ENCODE measurements at regions of chr1 and their contacts with region 1.

Region 1: GRCh38 chr1:58816072-58816746 is 32.4 kb upstream of the JUN start:
- DNase-seq: peak; percentile 85
- ATAC-seq: peak; percentile 91
- H3K4me3 Mint-ChIP-seq: peak overlapping the region; percentile 93
- H3K27ac Mint-ChIP-seq: peak overlapping the region; percentile 92
- H3K4me1 Mint-ChIP-seq: peaks cover 46% of the 10 kb centered on the region
- H3K27me3 Mint-ChIP-seq: no peaks in the 10 kb centered on the region
- CTCF ChIP-seq: no peak

Region 2: DNA sequence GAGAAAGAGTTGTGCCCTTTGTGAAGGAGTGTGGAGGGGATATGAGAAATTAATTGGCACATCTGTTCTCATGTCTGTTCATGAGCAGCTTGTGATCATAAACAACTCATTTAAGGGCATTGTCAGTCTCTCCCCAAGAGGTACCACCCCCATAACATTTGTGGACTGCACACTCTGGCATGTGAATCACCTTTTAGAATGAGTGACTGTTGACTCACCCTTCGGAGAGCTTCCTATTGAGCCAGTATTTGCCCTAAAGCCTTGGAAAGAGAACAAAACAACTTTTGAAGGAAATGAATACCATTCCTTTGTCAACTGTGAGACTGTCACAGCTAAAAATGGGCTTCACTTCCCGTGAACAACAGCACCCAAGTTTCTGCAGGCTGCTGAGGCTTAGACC is 88.8 kb before region 1 on chr1:
- CTCF ChIA-PET with region 1: no interaction called
- POLR2A ChIA-PET with region 1: no interaction called
- intact Hi-C with region 1: no loop called
- DNase-seq: no peak
- ATAC-seq: no peak
- H3K4me3 Mint-ChIP-seq: no peak overlapping the region
- H3K27ac Mint-ChIP-seq: no peak overlapping the region
- H3K4me1 Mint-ChIP-seq: peaks cover 10% of the 10 kb centered on the region
- H3K27me3 Mint-ChIP-seq: no peaks in the 10 kb centered on the region
- CTCF ChIP-seq: no peak

Region 3: DNA sequence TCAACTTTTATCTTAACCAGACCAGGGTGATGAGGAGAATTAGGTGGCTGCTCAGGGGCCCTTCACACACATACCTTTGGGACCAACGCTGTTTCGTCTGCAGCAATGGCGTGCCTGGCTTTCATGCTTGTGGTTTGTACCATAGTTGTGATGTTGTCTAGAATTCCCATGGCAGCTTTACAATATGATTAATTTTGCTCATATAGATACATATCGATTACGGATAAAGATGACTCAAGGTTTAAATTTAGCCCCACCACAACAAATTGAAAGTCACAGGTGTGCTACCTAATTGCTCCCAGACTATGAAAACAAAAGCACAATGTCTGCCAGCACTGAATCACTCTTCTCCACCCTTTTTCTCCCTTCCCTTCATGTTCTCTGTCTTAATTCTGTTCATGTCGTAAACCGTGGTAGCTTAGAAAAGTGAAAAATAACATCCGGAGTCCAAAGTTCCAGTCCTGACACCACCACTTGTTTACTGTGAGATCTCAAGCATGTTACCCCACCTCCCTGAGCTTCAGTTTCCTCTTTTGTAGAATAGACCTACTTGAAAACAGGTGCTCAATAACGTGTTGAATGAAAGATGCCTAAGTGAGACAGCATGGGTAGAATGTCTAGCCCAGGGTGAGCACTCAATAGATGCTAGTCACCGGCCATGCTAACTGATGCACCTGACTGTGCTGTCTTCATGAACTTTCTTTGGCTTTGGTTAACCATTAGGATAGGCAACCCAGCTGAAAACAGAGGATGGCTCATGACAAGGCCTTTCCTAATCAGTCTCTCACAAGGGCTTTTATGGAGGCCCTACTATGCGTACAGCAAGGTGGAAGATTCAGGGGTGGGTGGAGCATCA is 10.3 kb before region 1 on chr1:
- CTCF ChIA-PET with region 1: interaction called, 3 read pairs
- POLR2A ChIA-PET with region 1: interaction called, 20 read pairs
- intact Hi-C with region 1: loop called (anchors 1 kb)
- DNase-seq: no peak
- ATAC-seq: peak; percentile 78
- H3K4me3 Mint-ChIP-seq: peak overlapping the region; percentile 64
- H3K27ac Mint-ChIP-seq: peak overlapping the region; percentile 92
- H3K4me1 Mint-ChIP-seq: peaks cover 55% of the 10 kb centered on the region
- H3K27me3 Mint-ChIP-seq: no peaks in the 10 kb centered on the region
- CTCF ChIP-seq: no peak

Region 4: DNA sequence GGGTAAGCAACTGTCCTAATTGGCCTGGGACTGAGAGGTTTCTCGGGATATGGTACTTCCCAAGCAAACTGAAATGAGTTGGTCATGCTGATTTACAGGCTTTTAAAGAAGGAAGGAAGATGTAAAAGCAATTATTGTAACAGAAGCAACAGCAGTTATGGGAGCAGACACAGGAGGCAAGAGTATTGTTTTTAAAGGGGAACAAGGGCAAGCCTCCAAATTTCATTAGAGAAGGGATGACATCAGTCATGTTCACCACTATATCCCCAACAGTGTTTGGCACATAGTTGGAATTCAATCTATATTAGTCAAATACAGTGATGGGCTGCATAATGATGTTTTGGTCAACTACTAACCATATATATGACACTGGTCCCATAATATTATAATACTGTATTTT is 13.7 kb after region 1 on chr1:
- CTCF ChIA-PET with region 1: no interaction called
- POLR2A ChIA-PET with region 1: no interaction called
- intact Hi-C with region 1: no loop called
- DNase-seq: no peak
- ATAC-seq: no peak
- H3K4me3 Mint-ChIP-seq: no peak overlapping the region
- H3K27ac Mint-ChIP-seq: no peak overlapping the region
- H3K4me1 Mint-ChIP-seq: no peaks in the 10 kb centered on the region
- H3K27me3 Mint-ChIP-seq: no peaks in the 10 kb centered on the region
- CTCF ChIP-seq: no peak

Region 5: DNA sequence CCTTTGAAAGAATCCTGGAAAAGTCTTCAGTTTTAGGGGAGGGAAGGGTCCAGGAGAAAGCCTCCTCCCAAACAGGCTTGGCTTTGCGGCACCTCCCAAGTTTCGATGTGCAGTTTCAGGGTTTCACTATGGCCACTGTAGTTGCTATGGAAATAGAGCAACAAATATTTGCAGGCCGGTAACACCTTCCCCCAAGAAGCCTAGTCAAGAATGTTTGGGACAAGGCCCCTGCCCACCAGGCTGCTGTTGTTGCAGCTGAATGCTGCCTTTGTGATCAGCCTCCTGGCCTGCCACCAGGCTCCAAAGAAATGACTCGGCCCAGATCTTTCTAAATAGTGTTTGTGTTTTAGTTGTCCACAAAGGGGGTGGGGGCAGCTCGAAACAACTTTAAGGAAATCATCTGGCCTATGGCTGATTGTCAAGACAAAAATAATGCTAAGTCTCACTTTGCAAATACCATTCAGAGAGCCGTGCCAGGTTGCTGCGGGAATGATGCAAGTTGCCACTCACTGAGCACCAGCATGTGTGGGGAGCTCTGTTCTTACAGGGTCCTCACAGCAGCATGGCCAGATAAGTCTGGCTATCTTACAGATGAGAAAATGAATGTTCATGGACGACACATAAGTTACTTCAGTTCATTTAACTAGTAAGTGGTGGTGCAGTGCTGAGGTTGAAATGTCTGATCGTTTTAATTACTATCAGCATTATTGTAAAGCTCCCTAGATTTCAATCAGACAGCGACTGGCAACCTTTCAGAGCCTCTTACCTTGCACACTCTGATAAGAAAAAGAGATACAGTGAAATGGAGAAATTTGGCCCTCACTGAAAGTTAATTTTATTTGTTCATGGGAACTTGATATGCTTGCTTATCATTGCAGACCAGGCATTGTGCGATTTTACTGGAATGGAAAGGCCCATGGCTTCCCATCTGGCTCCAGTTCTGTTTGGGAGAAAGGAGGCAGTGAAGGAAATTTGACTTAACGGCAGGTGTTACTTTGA is 58.8 kb after region 1 on chr1:
- CTCF ChIA-PET with region 1: no interaction called
- POLR2A ChIA-PET with region 1: no interaction called
- intact Hi-C with region 1: no loop called
- DNase-seq: no peak
- ATAC-seq: no peak
- H3K4me3 Mint-ChIP-seq: no peak overlapping the region
- H3K27ac Mint-ChIP-seq: no peak overlapping the region
- H3K4me1 Mint-ChIP-seq: no peaks in the 10 kb centered on the region
- H3K27me3 Mint-ChIP-seq: peaks cover 2% of the 10 kb centered on the region
- CTCF ChIP-seq: no peak

Region 6: GRCh38 chr1:58903514-58904298 is 87.5 kb after region 1 on chr1:
- CTCF ChIA-PET with region 1: no interaction called
- POLR2A ChIA-PET with region 1: interaction called, 5 read pairs
- intact Hi-C with region 1: loop called (anchors 1 kb)
- DNase-seq: peak; percentile 75
- ATAC-seq: peak; percentile 90
- H3K4me3 Mint-ChIP-seq: peak overlapping the region; percentile 84
- H3K27ac Mint-ChIP-seq: peak overlapping the region; percentile 81
- H3K4me1 Mint-ChIP-seq: peaks cover 16% of the 10 kb centered on the region
- H3K27me3 Mint-ChIP-seq: no peaks in the 10 kb centered on the region
- CTCF ChIP-seq: no peak

Region 7: GRCh38 chr1:59007820-59008598 is 191.8 kb after region 1 on chr1:
- CTCF ChIA-PET with region 1: no interaction called
- POLR2A ChIA-PET with region 1: no interaction called
- intact Hi-C with region 1: loop called (anchors 1 kb)
- DNase-seq: no peak
- ATAC-seq: peak; percentile 76
- H3K4me3 Mint-ChIP-seq: peak overlapping the region; percentile 62
- H3K27ac Mint-ChIP-seq: peak overlapping the region; percentile 90
- H3K4me1 Mint-ChIP-seq: peaks cover 82% of the 10 kb centered on the region
- H3K27me3 Mint-ChIP-seq: no peaks in the 10 kb centered on the region
- CTCF ChIP-seq: no peak

Region 8: GRCh38 chr1:59020151-59020997 is 204.2 kb after region 1 on chr1:
- CTCF ChIA-PET with region 1: no interaction called
- POLR2A ChIA-PET with region 1: interaction called, 4 read pairs
- intact Hi-C with region 1: loop called (anchors 2 kb)
- DNase-seq: no peak
- ATAC-seq: peak; percentile 96
- H3K4me3 Mint-ChIP-seq: peak overlapping the region; percentile 77
- H3K27ac Mint-ChIP-seq: peak overlapping the region; percentile 91
- H3K4me1 Mint-ChIP-seq: peaks cover 52% of the 10 kb centered on the region
- H3K27me3 Mint-ChIP-seq: no peaks in the 10 kb centered on the region
- CTCF ChIP-seq: no peak

Region 9: GRCh38 chr1:59046730-59047157 is 230.5 kb after region 1 on chr1:
- CTCF ChIA-PET with region 1: no interaction called
- POLR2A ChIA-PET with region 1: interaction called, 5 read pairs
- intact Hi-C with region 1: loop called (anchors 1 kb)
- DNase-seq: peak; percentile 22
- ATAC-seq: peak; percentile 96
- H3K4me3 Mint-ChIP-seq: no peak overlapping the region
- H3K27ac Mint-ChIP-seq: peak overlapping the region; percentile 91
- H3K4me1 Mint-ChIP-seq: peaks cover 31% of the 10 kb centered on the region
- H3K27me3 Mint-ChIP-seq: no peaks in the 10 kb centered on the region
- CTCF ChIP-seq: no peak

Region 10: GRCh38 chr1:59506952-59507351 is 690.7 kb after region 1 on chr1:
- CTCF ChIA-PET with region 1: no interaction called
- POLR2A ChIA-PET with region 1: no interaction called
- intact Hi-C with region 1: loop called (anchors 1 kb)
- DNase-seq: no peak
- ATAC-seq: peak; percentile 94
- H3K4me3 Mint-ChIP-seq: no peak overlapping the region
- H3K27ac Mint-ChIP-seq: peak overlapping the region; percentile 19
- H3K4me1 Mint-ChIP-seq: peaks cover 12% of the 10 kb centered on the region
- H3K27me3 Mint-ChIP-seq: no peaks in the 10 kb centered on the region
- CTCF ChIP-seq: no peak